ENCODE measurements at regions of chr6 and their contacts with region 1.

Region 1: GRCh38 chr6:53725791-53726431 is 60.4 kb upstream of the KLHL31 start:
- DNase-seq: no peak
- H3K4me3 ChIP-seq: no peak overlapping the region
- CTCF ChIP-seq: peak; percentile 98

Region 2: GRCh38 chr6:53651764-53652401 is 74.0 kb before region 1 on chr6:
- CTCF ChIA-PET with region 1: interaction called, 16 read pairs
- POLR2A ChIA-PET with region 1: no interaction called
- DNase-seq: no peak
- H3K4me3 ChIP-seq: peak overlapping the region; percentile 71
- CTCF ChIP-seq: peak; percentile 37

Region 3: DNA sequence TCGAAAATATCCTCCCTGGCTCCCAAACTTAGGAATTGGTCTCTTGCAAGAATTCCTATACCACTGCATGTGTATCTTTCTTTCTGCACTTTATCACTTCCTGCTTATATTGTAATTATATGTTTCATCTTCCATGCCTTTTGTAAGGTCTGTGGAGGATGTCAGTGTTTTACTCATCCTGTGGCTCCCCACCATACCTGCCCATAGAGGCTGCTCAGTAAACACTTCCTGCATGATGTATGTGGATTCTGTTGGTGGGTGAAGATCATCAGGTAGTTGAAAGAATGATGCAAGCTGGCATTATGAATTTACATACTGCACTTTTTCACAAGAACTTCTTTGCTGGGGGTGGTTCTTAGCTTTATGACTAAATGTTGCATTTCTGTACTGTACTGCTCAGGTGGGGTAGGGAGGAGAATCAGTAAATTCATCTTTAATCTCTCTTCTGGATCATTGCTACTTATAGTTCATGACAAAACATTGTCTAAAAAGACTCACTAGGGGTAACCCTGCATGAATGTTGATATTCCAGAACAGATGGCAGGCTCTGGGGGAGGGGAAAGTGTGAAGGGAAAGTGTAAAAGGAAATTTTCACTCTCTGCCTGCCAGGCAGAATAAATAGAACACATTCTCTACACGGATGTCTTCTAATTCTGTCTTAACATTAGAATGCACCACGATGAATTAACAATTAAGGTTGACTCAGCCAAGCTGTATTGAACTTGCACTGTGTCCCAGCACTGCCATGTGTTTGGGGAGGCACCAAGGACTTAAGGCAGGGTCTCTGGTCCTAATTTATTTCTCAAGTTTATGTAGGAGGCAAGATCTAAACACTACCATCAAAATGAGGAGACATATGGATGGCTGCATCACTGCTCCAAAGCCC is 24.3 kb before region 1 on chr6:
- CTCF ChIA-PET with region 1: interaction called, 119 read pairs
- POLR2A ChIA-PET with region 1: no interaction called
- DNase-seq: no peak
- H3K4me3 ChIP-seq: no peak overlapping the region
- CTCF ChIP-seq: no peak

Region 4: DNA sequence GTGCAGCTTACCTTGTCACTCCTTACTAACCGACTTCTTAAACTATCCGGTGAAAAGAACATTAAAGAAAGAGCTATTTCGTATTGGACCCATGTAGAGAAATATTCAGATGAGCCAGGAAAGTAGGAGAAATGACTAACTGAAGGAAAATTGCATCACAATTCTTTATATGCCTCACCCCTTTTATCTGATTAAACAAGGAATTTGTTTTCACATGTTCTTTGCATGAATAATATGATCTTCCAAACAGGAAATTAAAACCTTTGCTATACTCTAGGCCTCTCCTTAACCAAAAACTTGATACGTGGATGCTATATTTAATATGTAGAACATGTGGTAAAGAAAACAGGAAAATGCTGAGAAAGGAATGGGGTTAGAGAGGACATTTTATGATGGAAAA is 26.9 kb after region 1 on chr6:
- CTCF ChIA-PET with region 1: interaction called, 47 read pairs
- POLR2A ChIA-PET with region 1: no interaction called
- DNase-seq: no peak
- H3K4me3 ChIP-seq: no peak overlapping the region
- CTCF ChIP-seq: no peak

Region 5: GRCh38 chr6:53943395-53943794 is 217.5 kb after region 1 on chr6:
- CTCF ChIA-PET with region 1: interaction called, 14 read pairs
- POLR2A ChIA-PET with region 1: no interaction called
- DNase-seq: no peak
- H3K4me3 ChIP-seq: no peak overlapping the region
- CTCF ChIP-seq: no peak